Activated T-helper 1 cell treated with anti-CD3 and anti-CD28 coated beads, Interleukin-12 subunit alpha, Interleukin-12 subunit beta, Interleukin-2, Interleukin-4 antibody, amounts not matched to agents 30 ng/mL and 10 ng/mL and 1 ng/mL, durations not matched to agents 14 hours and 24 hours and 36 hours (primary cell): ENCODE measurements at regions of chr12 and their contacts with region 1.

Region 1: GRCh38 chr12:2812290-2813213 is at the start of gene ITFG2:
- DNase-seq: peak; percentile 95
- H3K4me3 Mint-ChIP-seq: peak within 1 kb of the TSS; percentile 99
- H3K27ac Mint-ChIP-seq: peak within 1 kb of the TSS; percentile 100
- H3K4me1 Mint-ChIP-seq: peaks cover 23% of the 10 kb centered on the region
- H3K27me3 Mint-ChIP-seq: no peaks in the 10 kb centered on the region
- total RNA-seq, gene ITFG2: 35.1 and 42.2 TPM in 2 replicates

Region 2: GRCh38 chr12:2004113-2004929 is 808.2 kb before region 1 on chr12 and contains the start of gene DCP1B:
- intact Hi-C with region 1: loop called (anchors 2 kb)
- DNase-seq: peak; percentile 93
- H3K4me3 Mint-ChIP-seq: peak within 1 kb of the TSS; percentile 97
- H3K27ac Mint-ChIP-seq: peak within 1 kb of the TSS; percentile 95
- H3K4me1 Mint-ChIP-seq: peaks cover 31% of the 10 kb centered on the region
- H3K27me3 Mint-ChIP-seq: peaks cover 3% of the 10 kb centered on the region
- total RNA-seq, gene DCP1B: 8.8 and 9.8 TPM in 2 replicates

Region 3: GRCh38 chr12:2691006-2691344 is 121.6 kb before region 1 on chr12:
- intact Hi-C with region 1: loop called (anchors 1 kb)
- DNase-seq: peak; percentile 41
- H3K4me3 Mint-ChIP-seq: peak overlapping the region; percentile 86
- H3K27ac Mint-ChIP-seq: peak overlapping the region; percentile 84
- H3K4me1 Mint-ChIP-seq: peaks cover 39% of the 10 kb centered on the region
- H3K27me3 Mint-ChIP-seq: peaks cover 12% of the 10 kb centered on the region

Region 4: DNA sequence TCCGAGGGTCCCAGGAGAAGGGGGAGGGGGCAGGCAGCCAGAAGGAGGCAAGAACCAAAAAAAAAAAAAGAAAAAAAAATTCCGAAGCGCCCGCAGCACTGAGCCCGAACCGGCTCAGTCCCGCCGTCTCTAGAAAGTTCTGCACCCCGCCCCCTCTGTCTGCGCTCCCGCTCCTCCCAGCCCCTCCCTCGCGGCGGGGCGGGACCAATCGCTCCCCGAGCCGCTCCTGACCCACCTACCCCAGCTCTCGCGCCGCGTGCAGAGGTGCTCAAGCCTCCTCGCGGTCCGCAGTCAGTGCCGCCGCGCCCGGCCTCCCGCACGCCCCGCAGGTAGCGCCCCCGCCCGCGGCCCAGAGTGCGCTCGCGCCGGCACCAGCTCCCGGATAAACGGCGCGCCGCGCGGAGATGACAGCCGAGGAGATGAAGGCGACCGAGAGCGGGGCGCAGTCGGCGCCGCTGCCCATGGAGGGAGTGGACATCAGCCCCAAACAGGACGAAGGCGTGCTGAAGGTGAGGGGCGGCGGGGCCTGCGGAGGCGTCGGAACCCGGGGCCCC is 17.7 kb before region 1 on chr12 and contains the start of gene FKBP4:
- intact Hi-C with region 1: loop called (anchors 1 kb)
- DNase-seq: peak; percentile 86
- H3K4me3 Mint-ChIP-seq: peak within 1 kb of the TSS; percentile 96
- H3K27ac Mint-ChIP-seq: peak within 1 kb of the TSS; percentile 75
- H3K4me1 Mint-ChIP-seq: peaks cover 15% of the 10 kb centered on the region
- H3K27me3 Mint-ChIP-seq: peaks cover 20% of the 10 kb centered on the region
- total RNA-seq, gene FKBP4: 247 and 269 TPM in 2 replicates

Region 5: DNA sequence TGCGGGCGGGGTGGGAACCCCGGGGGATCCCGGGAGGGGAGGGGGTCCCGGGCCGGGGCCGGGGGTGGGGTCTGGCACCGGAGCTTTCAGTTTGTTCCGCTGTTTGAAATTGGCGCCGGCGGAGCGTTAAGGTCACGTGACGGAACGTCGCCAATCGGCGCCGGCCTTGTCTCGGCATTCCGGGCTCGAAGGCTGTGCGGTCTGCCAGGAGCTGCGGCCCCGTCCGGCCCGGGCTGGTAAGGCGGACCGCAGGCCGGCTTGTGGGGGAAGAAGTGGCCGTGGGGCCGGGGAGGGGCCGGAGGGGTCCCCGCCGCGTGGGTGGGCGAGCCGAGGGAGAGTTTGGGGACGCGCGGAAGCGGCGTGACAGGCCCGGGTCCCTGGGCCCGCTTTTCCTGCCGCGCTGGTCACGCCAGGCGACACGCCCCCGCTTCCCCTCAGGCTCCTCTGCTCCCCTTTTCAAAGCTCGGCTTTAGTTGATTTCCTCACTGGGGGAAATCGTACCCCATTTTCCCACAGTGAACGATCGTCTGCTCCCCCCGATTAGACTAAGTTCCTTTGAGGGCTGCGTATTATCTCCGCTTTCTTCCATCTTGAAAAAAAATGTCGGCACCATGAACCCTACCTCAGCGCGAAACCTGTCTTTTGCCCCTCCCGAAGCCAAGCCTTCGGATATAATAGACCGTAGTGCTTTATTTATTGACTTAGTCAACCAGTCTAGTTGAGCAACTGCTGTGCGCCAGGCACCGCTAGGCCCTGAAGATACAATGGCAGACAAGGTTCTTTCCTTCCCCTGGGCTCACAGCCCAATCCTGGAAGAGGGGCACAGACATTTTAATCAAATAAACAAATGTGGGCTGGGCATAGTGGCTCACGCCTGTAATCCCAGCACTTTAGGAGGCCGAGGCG is 64.7 kb after region 1 on chr12 and contains the starts of genes FOXM1 and RHNO1:
- intact Hi-C with region 1: loop called (anchors 1 kb)
- DNase-seq: peak; percentile 86
- H3K4me3 Mint-ChIP-seq: peak within 1 kb of the TSS; percentile 99
- H3K27ac Mint-ChIP-seq: peak within 1 kb of the TSS; percentile 100
- H3K4me1 Mint-ChIP-seq: peaks cover 51% of the 10 kb centered on the region
- H3K27me3 Mint-ChIP-seq: no peaks in the 10 kb centered on the region
- total RNA-seq, gene FOXM1: 72.6 and 75.9 TPM in 2 replicates
- total RNA-seq, gene RHNO1: 43.3 and 48.1 TPM in 2 replicates

Region 6: DNA sequence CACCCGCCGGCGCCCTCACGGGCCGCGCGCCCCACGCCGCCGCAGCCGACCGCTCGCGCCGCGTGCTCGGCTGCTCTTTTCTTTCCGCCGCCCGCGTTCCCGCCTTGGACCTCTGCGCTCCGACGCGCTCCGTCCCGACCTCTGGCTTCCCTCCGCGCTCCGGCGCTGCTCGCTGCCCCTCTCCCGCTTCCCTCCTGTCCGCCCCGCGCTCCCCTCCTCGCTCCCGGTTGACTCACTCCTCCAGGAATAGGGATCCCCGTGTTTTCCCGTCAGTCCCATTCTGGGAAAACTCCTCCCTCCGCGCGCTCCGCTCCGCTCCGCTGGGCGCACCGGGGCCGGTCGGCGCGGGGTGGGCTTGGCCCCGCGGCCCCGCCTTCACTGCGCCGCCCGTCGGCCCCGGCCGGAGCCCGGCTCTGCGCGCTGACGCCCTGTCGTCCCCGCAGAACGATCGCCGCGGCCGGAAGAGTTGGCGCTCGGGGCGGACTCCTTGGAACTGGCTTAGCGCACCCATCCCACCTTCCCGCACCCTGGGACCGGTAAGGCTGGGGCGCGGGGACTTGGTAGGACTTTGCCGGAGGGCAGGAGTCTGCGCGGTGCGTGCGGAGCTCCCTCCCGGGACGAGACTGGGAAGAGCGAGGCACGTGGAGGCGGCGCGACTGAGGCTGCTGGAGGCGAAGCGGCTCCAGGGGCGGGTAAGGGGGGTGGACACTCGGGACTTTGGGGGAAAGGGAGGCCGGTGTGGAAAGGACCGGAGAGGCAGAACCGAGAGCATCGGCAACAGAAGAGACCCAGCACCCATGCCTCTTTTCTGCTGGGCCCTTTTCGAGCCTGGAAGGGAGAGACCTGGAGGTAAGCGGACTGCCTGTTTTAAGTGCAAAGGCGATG is 147.2 kb after region 1 on chr12:
- intact Hi-C with region 1: loop called (anchors 1 kb)
- DNase-seq: no peak
- H3K4me3 Mint-ChIP-seq: peak overlapping the region; percentile 74
- H3K27ac Mint-ChIP-seq: peak overlapping the region; percentile 15
- H3K4me1 Mint-ChIP-seq: peaks cover 18% of the 10 kb centered on the region
- H3K27me3 Mint-ChIP-seq: peaks cover 63% of the 10 kb centered on the region

Region 7: DNA sequence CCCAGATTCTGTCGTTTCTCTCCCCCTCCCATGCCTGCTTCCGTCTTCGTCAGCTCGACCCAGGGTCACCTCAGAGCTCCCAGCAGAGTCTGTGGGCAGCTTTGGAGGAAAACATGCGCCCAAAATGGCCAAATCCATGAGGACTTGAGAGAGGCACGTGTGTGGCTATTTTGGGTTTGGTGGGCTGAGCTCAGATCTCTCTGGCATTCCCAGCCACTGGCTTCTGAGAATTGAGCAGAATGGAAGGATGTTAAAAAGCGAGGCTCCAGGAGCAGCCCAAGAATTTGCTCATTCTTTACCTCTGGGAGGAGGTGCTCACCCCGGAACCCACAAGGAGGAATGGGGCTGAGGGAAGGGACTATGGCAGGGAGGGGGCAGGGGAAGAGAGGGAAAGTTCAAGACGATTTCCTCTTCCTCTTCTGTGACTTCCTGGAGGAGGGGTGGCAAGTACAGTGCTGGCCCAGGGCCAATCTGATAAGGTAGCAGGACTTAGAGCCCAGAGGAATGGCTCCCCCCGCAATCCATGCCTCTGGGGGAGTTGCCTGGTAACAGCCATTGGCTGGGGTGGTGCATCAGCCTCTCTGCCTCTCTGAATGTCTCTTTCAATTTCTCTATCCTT is 284.7 kb after region 1 on chr12:
- intact Hi-C with region 1: no loop called
- DNase-seq: no peak
- H3K4me3 Mint-ChIP-seq: no peak overlapping the region
- H3K27ac Mint-ChIP-seq: no peak overlapping the region
- H3K4me1 Mint-ChIP-seq: no peaks in the 10 kb centered on the region
- H3K27me3 Mint-ChIP-seq: peaks cover 11% of the 10 kb centered on the region

Region 8: GRCh38 chr12:4320853-4321701 is 1508.5 kb after region 1 on chr12 and contains the start of gene TIGAR:
- intact Hi-C with region 1: loop called (anchors 5 kb)
- DNase-seq: peak; percentile 93
- H3K4me3 Mint-ChIP-seq: peak within 1 kb of the TSS; percentile 93
- H3K27ac Mint-ChIP-seq: peak within 1 kb of the TSS; percentile 93
- H3K4me1 Mint-ChIP-seq: peaks cover 45% of the 10 kb centered on the region
- H3K27me3 Mint-ChIP-seq: no peaks in the 10 kb centered on the region
- total RNA-seq, gene TIGAR: 14.4 TPM in 2 replicates